OCI-LY7 (cell line): ENCODE measurements at regions of chr9 and their contacts with region 1.

Region 1: GRCh38 chr9:76562511-76562911 is 103.5 kb downstream of the GCNT1 start:
- DNase-seq: no peak
- H3K4me3 ChIP-seq: no peak overlapping the region
- H3K27ac ChIP-seq: peak overlapping the region; percentile 49
- H3K4me1 ChIP-seq: peaks cover 32% of the 10 kb centered on the region
- CTCF ChIP-seq: no peak

Region 2: DNA sequence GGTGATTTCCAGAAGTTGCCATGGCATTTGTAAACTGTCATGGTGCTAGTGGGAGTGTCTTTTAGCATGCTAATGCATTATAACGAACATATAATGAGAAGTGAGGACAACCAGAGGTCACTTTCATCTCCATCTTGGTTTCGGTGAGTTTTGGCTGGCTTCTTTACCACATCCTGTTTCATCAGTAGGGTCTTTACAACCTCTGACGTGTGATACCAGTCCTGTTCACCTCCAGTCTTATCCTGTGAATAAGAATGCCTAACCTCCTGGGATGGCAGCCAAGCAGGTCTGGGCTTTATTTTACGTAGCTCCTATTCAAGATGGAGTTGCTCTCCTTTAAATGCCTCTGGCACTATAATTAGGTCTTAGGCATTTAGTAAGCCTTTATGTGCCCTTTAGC is 147.9 kb before region 1 on chr9:
- CTCF ChIA-PET with region 1: no interaction called
- POLR2A ChIA-PET with region 1: no interaction called
- intact Hi-C with region 1: loop called (anchors 5 kb)
- DNase-seq: peak; percentile 49
- H3K4me3 ChIP-seq: no peak overlapping the region
- H3K27ac ChIP-seq: no peak overlapping the region
- H3K4me1 ChIP-seq: peaks cover 22% of the 10 kb centered on the region
- CTCF ChIP-seq: no peak

Region 3: GRCh38 chr9:76704593-76705204 is 142.2 kb after region 1 on chr9:
- CTCF ChIA-PET with region 1: no interaction called
- POLR2A ChIA-PET with region 1: no interaction called
- intact Hi-C with region 1: no loop called
- DNase-seq: peak; percentile 77
- H3K4me3 ChIP-seq: no peak overlapping the region
- H3K27ac ChIP-seq: no peak overlapping the region
- H3K4me1 ChIP-seq: no peaks in the 10 kb centered on the region
- CTCF ChIP-seq: peak; percentile 90

Region 4: GRCh38 chr9:76787677-76788076 is 225.2 kb after region 1 on chr9:
- CTCF ChIA-PET with region 1: no interaction called
- POLR2A ChIA-PET with region 1: no interaction called
- intact Hi-C with region 1: no loop called
- DNase-seq: no peak
- H3K4me3 ChIP-seq: no peak overlapping the region
- H3K27ac ChIP-seq: no peak overlapping the region
- H3K4me1 ChIP-seq: no peaks in the 10 kb centered on the region
- CTCF ChIP-seq: no peak

Region 5: GRCh38 chr9:77194423-77194822 is 631.9 kb after region 1 on chr9:
- CTCF ChIA-PET with region 1: no interaction called
- POLR2A ChIA-PET with region 1: no interaction called
- intact Hi-C with region 1: no loop called
- DNase-seq: no peak
- H3K4me3 ChIP-seq: no peak overlapping the region
- H3K27ac ChIP-seq: no peak overlapping the region
- H3K4me1 ChIP-seq: no peaks in the 10 kb centered on the region
- CTCF ChIP-seq: no peak